ENCODE measurements at regions of chr13 and their contacts with region 1.

Region 1: DNA sequence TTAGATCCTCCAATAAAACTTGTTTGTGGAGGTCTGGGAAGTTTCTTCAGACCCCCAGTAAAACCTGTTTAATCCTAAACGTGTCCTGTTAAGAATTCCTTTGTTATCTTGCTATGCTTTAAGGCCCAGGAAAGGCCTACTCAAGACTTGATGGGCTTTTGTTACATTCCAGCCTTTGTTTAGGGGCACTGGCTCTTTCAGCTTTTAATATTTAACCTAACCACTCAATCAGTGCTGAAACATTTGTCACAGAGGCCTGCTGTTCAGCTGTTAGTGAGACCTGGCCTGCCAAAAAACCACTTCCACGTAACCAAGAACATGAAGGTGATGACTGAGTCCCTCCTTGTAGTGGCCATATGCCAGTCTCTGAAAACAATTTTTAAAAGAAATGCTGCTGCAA is 41.7 kb downstream of the PCDH17 start:
- DNase-seq: peak; percentile 24 to 37
- H3K4me3 ChIP-seq: no peak overlapping the region
- H3K4me3 Mint-ChIP-seq: no peak overlapping the region
- H3K27ac Mint-ChIP-seq: no peak overlapping the region
- H3K4me1 ChIP-seq: peaks cover 17% of the 10 kb centered on the region
- H3K4me1 Mint-ChIP-seq: peaks cover 5% of the 10 kb centered on the region
- H3K27me3 ChIP-seq: no peaks in the 10 kb centered on the region
- H3K27me3 Mint-ChIP-seq: no peaks in the 10 kb centered on the region
- CTCF ChIP-seq: no peak

Region 2: DNA sequence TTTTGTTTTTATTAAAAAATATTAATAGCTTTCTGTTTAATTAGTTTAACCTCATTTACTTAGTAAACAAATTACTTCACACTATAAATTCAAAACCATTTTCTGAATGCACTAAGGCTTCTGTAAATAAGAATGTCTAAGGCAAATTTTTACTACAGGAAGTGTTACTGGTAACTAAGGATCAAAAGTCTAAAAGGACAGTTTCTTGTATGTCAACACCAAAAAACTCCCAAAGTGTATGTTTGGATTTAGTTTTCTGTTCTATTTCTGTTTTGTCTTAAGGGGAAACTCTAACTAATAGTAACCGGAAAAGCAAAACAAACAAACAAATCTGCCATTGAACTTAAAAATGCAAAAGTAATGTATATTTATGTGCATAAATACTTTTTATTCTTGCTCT is 481.5 kb before region 1 on chr13:
- CTCF ChIA-PET with region 1: no interaction called
- POLR2A ChIA-PET with region 1: no interaction called
- intact Hi-C with region 1: no loop called
- DNase-seq: no peak
- H3K4me3 ChIP-seq: no peak overlapping the region
- H3K4me3 Mint-ChIP-seq: no peak overlapping the region
- H3K27ac Mint-ChIP-seq: no peak overlapping the region
- H3K4me1 ChIP-seq: no peaks in the 10 kb centered on the region
- H3K4me1 Mint-ChIP-seq: no peaks in the 10 kb centered on the region
- H3K27me3 ChIP-seq: no peaks in the 10 kb centered on the region
- H3K27me3 Mint-ChIP-seq: no peaks in the 10 kb centered on the region
- CTCF ChIP-seq: no peak

Region 3: GRCh38 chr13:57653229-57653989 is 19.8 kb before region 1 on chr13:
- CTCF ChIA-PET with region 1: no interaction called
- POLR2A ChIA-PET with region 1: no interaction called
- intact Hi-C with region 1: loop called (anchors 2 kb)
- DNase-seq: no peak
- H3K4me3 ChIP-seq: no peak overlapping the region
- H3K4me3 Mint-ChIP-seq: no peak overlapping the region
- H3K27ac Mint-ChIP-seq: no peak overlapping the region
- H3K4me1 ChIP-seq: peaks cover 10% of the 10 kb centered on the region; the same call in 1 of the 2 replicates
- H3K4me1 Mint-ChIP-seq: peaks cover 7% of the 10 kb centered on the region
- H3K27me3 ChIP-seq: no peaks in the 10 kb centered on the region
- H3K27me3 Mint-ChIP-seq: no peaks in the 10 kb centered on the region
- CTCF ChIP-seq: no peak

Measured in Caco-2 (cell line).